ENCODE measurements at regions of chr2 and their contacts with region 1.

Region 1: GRCh38 chr2:158024288-158024898 is 77.3 kb upstream of the UPP2 start:
- DNase-seq: no peak
- ATAC-seq: peak; percentile 86
- H3K4me3 ChIP-seq: no peak overlapping the region
- H3K27ac ChIP-seq: no peak overlapping the region
- H3K4me1 ChIP-seq: no peaks in the 10 kb centered on the region
- H3K27me3 ChIP-seq: no peaks in the 10 kb centered on the region
- CTCF ChIP-seq: peak; percentile 74 to 76 (median 75)
- EP300 ChIP-seq: no peak
- POLR2A ChIP-seq: no peak
- RAD21 ChIP-seq: peak; percentile 75

Region 2: GRCh38 chr2:158013891-158014290 is 10.5 kb before region 1 on chr2:
- CTCF ChIA-PET with region 1: interaction called, 26 read pairs
- POLR2A ChIA-PET with region 1: no interaction called
- RAD21 ChIA-PET with region 1: interaction called, 3 read pairs
- SMC1A ChIA-PET with region 1: no interaction called
- in situ Hi-C with region 1: no loop called
- intact Hi-C with region 1: no loop called
- DNase-seq: no peak
- ATAC-seq: peak; percentile 23; the same call in 2 of the 3 replicates
- H3K4me3 ChIP-seq: no peak overlapping the region
- H3K27ac ChIP-seq: no peak overlapping the region
- H3K4me1 ChIP-seq: no peaks in the 10 kb centered on the region
- H3K27me3 ChIP-seq: peaks cover 0 to 3% of the 10 kb centered on the region in 2 experiments; a peak in 1 of 4 replicates
- CTCF ChIP-seq: no peak
- EP300 ChIP-seq: no peak
- POLR2A ChIP-seq: no peak
- RAD21 ChIP-seq: no peak